ENCODE measurements at regions of chr7 and their contacts with region 1.

Region 1: GRCh38 chr7:35777121-35777520 is 23.7 kb upstream of the SEPTIN7 start:
- DNase-seq: no peak
- ATAC-seq: no peak
- H3K4me3 ChIP-seq: no peak overlapping the region
- H3K4me3 Mint-ChIP-seq: no peak overlapping the region
- H3K27ac ChIP-seq: no peak overlapping the region
- H3K27ac Mint-ChIP-seq: no peak overlapping the region
- H3K4me1 ChIP-seq: no peaks in the 10 kb centered on the region
- H3K4me1 Mint-ChIP-seq: peaks cover 3% of the 10 kb centered on the region
- H3K27me3 ChIP-seq: no peaks in the 10 kb centered on the region
- H3K27me3 Mint-ChIP-seq: no peaks in the 10 kb centered on the region
- CTCF ChIP-seq: no peak

Region 2: DNA sequence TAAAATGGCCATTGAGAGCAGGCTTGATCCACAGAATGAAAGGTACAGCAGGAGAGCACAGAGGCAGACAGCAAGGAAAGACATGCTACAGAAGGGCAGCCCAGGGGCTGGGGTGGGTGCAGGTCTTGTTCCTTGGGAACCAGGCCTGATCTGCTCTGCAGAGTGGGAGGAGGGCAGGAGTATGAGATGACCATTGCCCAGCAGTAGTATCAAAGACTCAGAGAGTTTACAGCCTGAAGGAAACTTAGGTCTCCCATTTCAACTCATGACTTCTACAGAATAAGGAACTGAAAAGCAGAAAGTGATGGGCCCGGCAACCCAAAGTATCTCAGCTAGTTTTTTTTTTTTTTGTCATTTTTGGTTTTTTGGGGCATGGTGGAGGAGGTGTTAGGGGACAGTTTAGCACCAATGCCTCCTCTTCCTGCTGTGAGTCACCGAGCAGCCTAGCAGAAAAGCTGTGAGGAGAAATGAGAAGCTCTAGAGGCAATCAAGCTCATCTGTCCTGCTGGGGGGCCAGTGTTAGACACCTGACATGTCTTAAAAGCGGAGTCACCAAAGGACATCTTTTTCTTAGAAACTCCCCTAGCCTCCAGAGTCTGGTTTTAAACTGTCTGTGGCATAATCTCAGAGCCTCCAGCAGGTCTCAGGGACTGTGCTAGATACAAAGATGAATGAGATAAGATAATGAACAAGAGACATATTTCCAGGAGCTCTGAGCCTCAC is 47.9 kb before region 1 on chr7:
- CTCF ChIA-PET with region 1: no interaction called
- POLR2A ChIA-PET with region 1: no interaction called
- intact Hi-C with region 1: loop called in 1 of 2 experiments (anchors 5 kb)
- DNase-seq: peak in 7 of 9 experiments; percentile 26 to 91 (median 52)
- ATAC-seq: peak; percentile 65
- H3K4me3 ChIP-seq: peak overlapping the region in 1 of 2 experiments; percentile 18
- H3K4me3 Mint-ChIP-seq: peak overlapping the region; percentile 26
- H3K27ac ChIP-seq: peak overlapping the region; percentile 22 to 77
- H3K27ac Mint-ChIP-seq: peak overlapping the region; percentile 78
- H3K4me1 ChIP-seq: peaks cover 56% of the 10 kb centered on the region
- H3K4me1 Mint-ChIP-seq: peaks cover 61% of the 10 kb centered on the region
- H3K27me3 ChIP-seq: no peaks in the 10 kb centered on the region
- H3K27me3 Mint-ChIP-seq: no peaks in the 10 kb centered on the region
- CTCF ChIP-seq: no peak

Region 3: DNA sequence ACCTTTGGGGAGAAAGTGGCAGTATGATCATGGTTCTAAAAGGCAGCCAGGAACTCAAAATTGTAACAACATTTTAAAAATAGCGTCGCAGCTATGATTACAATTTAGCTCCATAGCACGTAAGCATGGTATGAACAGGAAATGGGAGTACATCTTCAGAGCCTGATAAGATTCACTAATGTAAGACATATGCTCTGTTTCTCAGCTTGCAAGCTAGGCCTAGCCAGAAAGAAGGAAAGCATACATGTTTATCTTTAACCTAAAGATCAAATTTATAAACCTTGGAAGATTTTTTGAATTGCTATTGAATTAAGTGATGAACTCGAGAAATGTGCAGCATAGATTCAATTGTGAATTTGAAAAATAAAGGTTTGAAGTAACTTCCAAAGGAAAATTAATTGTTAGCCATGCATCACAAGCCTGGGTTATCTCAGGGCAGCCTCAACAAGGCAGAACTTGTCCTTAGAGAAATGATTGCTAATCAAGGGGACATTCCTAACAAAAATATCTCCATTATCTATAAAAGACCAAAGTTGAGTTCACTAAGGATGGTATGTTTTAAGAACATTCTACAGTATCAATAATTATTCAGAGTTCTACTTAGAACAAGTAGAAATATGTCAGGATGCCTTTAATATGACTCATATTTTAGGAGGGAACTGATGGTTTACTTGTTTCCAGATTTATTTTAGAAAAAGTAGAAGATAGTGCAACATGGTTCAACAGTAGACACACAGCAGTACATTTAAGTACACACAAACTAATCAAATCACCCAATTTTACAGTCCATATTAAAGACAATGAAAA is 15.0 kb before region 1 on chr7:
- CTCF ChIA-PET with region 1: no interaction called
- POLR2A ChIA-PET with region 1: no interaction called
- intact Hi-C with region 1: no loop called
- DNase-seq: no peak
- ATAC-seq: no peak
- H3K4me3 ChIP-seq: no peak overlapping the region
- H3K4me3 Mint-ChIP-seq: no peak overlapping the region
- H3K27ac ChIP-seq: no peak overlapping the region
- H3K27ac Mint-ChIP-seq: no peak overlapping the region
- H3K4me1 ChIP-seq: peaks cover 9% of the 10 kb centered on the region
- H3K4me1 Mint-ChIP-seq: peaks cover 12% of the 10 kb centered on the region
- H3K27me3 ChIP-seq: no peaks in the 10 kb centered on the region
- H3K27me3 Mint-ChIP-seq: no peaks in the 10 kb centered on the region
- CTCF ChIP-seq: no peak

Region 4: GRCh38 chr7:36625247-36625646 is 848.1 kb after region 1 on chr7:
- CTCF ChIA-PET with region 1: no interaction called
- POLR2A ChIA-PET with region 1: no interaction called
- intact Hi-C with region 1: no loop called
- DNase-seq: no peak
- ATAC-seq: no peak
- H3K4me3 ChIP-seq: no peak overlapping the region
- H3K4me3 Mint-ChIP-seq: no peak overlapping the region
- H3K27ac ChIP-seq: peak overlapping the region in 1 of 2 experiments; percentile 58
- H3K27ac Mint-ChIP-seq: peak overlapping the region; percentile 46
- H3K4me1 ChIP-seq: peaks cover 8% of the 10 kb centered on the region
- H3K4me1 Mint-ChIP-seq: peaks cover 42% of the 10 kb centered on the region
- H3K27me3 ChIP-seq: no peaks in the 10 kb centered on the region
- H3K27me3 Mint-ChIP-seq: no peaks in the 10 kb centered on the region
- CTCF ChIP-seq: no peak